ENCODE measurements at regions of chr9 and their contacts with region 1.

Region 1: DNA sequence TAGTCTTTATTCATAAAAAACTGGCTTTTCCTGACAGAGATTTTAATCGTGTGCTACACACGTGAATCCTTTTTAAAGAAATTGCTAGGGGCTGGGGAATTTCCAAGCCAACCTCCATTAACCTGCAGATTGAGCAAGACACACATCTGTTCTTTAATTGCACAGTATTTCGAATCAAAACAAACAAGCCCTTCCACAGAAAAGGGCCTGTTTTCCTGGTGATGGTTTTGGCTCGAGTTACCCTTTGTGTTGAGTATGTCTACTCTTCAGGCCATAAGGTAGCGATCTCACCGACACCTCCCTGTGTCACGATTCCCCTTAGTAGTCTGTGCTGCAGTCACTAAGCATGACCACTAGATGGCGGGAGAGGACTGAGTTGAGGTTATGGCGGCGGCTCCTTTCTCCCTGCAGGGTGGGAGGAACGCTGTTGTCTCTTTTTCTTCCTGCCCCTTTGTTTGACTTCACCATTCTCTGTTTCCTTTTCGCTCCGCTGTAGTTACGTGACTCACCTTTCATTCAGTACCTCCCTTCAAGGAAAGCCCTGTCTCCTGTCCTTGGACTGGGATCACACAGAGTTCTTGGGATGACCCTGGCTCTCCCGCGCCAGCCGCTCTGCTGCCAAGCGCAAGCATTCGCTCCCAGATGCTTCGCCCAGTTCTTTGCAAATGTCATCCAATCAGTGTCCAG is 137.1 kb upstream of the SLC24A2 start:
- DNase-seq: peak; percentile 64 to 70 (median 69)
- ATAC-seq: peak; percentile 83 to 96 (median 94)
- H3K4me3 ChIP-seq: peak overlapping the region in 11 of 12 donors; percentile 14 to 54 (median 41)
- H3K27ac ChIP-seq: no peak overlapping the region
- H3K4me1 ChIP-seq: peaks cover 0 to 8% (median 0%) of the 10 kb centered on the region in 12 donors
- H3K27me3 ChIP-seq: peaks cover 0 to 4% (median 0%) of the 10 kb centered on the region in 9 donors
- CTCF ChIP-seq: peak; percentile 92 to 99 (median 96)
- POLR2A ChIP-seq: no peak

Region 2: DNA sequence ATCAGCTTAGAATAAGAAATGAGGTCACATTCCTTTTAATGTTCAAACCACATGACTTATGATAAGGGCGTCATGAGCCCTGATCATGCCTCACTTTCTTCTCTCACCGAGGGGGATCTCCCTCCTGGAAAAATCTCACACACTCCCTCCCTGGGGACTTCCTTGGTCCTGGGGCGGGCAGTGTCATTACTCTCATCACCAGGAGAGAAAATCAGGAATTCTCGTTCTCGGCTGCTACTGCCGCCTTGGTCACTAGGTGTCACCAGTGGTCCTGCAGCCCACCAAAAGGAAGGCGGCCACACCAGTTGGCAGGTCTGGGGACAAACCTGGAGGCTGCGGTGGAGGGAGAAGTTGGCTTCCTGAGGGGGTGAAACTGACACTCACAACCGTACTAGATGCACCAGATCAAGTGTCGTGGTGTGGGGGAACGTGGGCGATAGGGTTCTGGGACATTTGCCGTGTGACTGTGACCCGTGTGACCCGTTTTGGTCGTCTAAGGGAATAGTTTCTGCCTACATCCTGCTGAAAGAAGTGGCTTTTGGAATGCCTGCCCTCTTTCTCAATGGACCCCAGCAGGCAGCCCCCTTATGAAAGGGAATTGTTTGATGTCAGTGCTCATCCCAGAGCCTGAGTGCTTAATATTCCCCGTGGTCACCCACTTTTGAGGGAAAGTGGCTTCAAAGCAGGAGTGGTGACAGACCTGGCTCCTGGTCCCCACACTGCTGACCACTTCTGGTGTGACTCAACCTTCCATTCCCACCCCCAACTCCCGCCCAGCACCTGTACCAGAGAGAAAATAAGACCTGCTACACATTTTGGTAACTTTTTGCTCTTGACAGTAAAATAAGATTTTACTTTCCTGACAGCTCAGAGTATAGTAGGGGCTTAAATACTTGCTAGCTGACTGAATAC is 454.0 kb before region 1 on chr9:
- intact Hi-C with region 1: loop called in 2 of 10 experiments (anchors 5 kb)
- DNase-seq: peak; percentile 43 to 75 (median 61)
- ATAC-seq: peak; percentile 32 to 88 (median 78)
- H3K4me3 ChIP-seq: peak overlapping the region in 7 of 12 donors; percentile 10 to 34 (median 17)
- H3K27ac ChIP-seq: peak overlapping the region in 1 of 12 donors; percentile 42
- H3K4me1 ChIP-seq: peaks cover 0 to 15% (median 10%) of the 10 kb centered on the region in 12 donors
- H3K27me3 ChIP-seq: no peaks in the 10 kb centered on the region
- CTCF ChIP-seq: peak; percentile 65 to 85 (median 74)
- POLR2A ChIP-seq: no peak

Region 3: GRCh38 chr9:19493174-19493811 is 432.7 kb before region 1 on chr9:
- intact Hi-C with region 1: loop called in 4 of 10 experiments (anchors 2 to 10 kb)
- DNase-seq: peak; percentile 56 to 90 (median 86)
- ATAC-seq: peak; percentile 75 to 91 (median 90)
- H3K4me3 ChIP-seq: peak overlapping the region in 9 of 12 donors; percentile 19 to 50 (median 39)
- H3K27ac ChIP-seq: peak overlapping the region; percentile 3 to 79 (median 40)
- H3K4me1 ChIP-seq: peaks cover 0 to 16% (median 4%) of the 10 kb centered on the region in 12 donors
- H3K27me3 ChIP-seq: no peaks in the 10 kb centered on the region
- CTCF ChIP-seq: peak; percentile 57 to 85 (median 72)
- POLR2A ChIP-seq: no peak

Region 4: DNA sequence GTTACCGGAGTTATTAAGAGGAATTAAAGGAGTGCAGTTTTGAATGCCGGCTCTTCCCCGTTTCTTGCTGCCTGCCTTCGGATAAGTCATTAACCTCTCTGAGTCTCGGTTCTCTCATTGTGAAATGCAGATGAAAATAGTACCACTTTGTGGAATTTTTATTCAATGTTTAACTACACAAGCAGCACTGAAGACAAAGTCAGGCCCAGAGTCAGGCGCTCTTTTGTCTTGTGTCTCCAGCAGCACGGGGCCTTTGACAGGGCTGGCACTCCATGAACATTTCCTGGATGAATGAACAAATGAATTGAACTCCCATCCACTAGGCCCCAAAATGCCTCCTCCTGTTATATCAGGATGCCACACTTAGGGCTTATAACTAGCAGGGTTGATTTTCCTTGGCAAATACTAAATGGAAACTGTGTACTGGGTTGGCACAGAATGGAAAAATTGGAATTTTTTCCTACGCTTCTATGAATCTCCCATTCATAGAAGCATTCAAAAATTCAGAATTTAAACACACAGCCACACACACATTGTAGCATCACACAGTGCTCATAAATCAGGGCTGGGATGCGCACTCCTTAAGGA is 363.6 kb after region 1 on chr9:
- intact Hi-C with region 1: loop called in 1 of 10 experiments (anchors 10 kb)
- DNase-seq: no peak
- ATAC-seq: no peak
- H3K4me3 ChIP-seq: no peak overlapping the region
- H3K27ac ChIP-seq: no peak overlapping the region
- H3K4me1 ChIP-seq: peaks cover 0 to 13% (median 0%) of the 10 kb centered on the region in 12 donors
- H3K27me3 ChIP-seq: no peaks in the 10 kb centered on the region
- CTCF ChIP-seq: no peak
- POLR2A ChIP-seq: no peak

Region 5: DNA sequence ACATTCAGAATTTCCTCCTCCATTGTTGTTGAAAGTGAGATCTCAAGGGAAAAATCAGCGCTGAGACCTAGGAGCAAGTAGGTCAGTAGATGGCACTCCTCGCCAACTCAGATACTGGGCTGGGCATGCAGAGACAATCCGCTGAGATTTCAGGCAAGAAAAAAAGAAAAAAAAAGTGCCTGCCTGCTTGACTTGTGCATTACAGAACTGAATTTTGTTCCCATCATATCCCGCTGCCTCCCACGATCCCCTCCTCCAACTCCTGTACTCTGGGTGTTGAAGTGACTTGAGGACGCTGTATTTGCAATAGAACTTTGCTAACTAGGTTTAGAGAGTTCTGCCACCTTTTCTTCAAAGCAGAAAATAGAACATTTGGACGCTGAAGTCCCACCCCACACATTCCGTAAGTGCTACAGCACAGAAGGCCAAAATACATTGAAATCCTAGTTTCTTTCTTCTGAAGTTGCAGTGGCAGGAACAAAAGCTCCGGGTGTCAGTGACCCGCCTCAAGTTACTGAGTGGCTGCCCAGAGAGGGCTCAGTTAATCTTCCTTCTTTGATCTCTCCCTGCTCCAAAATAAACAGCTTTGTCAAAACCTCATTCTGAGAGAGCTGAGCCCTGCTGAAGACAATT is 430.6 kb after region 1 on chr9:
- intact Hi-C with region 1: loop called in 8 of 10 experiments (anchors 5 to 10 kb)
- DNase-seq: peak; percentile 58 to 70 (median 68)
- ATAC-seq: peak; percentile 76 to 95 (median 94)
- H3K4me3 ChIP-seq: peak overlapping the region in 8 of 12 donors; percentile 1 to 32 (median 28)
- H3K27ac ChIP-seq: peak overlapping the region in 10 of 12 donors; percentile 20 to 58 (median 43)
- H3K4me1 ChIP-seq: peaks cover 0 to 25% (median 15%) of the 10 kb centered on the region in 12 donors
- H3K27me3 ChIP-seq: no peaks in the 10 kb centered on the region
- CTCF ChIP-seq: peak; percentile 56 to 82 (median 73)
- POLR2A ChIP-seq: no peak

Region 6: DNA sequence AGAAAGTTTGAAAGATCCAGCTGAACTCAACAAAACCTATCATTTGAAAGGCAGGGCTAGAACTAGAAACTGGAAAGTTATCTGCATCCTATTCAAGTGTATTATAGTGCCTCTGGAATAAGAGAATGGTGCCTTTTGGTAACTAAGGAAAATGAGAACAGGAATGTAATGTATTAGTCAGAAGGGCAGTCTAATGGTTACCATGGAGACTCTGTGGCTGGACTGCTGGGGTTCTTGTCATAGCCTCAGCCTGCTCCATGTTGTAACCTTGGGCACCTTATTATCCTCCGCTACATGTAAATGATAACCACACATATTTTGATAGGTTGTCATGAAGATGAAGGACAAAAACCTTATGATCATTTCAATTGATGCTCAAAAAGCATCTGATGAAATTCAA is 1176.3 kb after region 1 on chr9:
- intact Hi-C with region 1: loop called in 1 of 10 experiments (anchors 10 kb)
- DNase-seq: no peak
- ATAC-seq: no peak
- H3K4me3 ChIP-seq: no peak overlapping the region
- H3K27ac ChIP-seq: no peak overlapping the region
- H3K4me1 ChIP-seq: peaks cover 0 to 19% (median under 1%) of the 10 kb centered on the region in 12 donors
- H3K27me3 ChIP-seq: no peaks in the 10 kb centered on the region
- CTCF ChIP-seq: no peak
- POLR2A ChIP-seq: no peak

Measured in heart left ventricle (tissue), 16 donors.